ENCODE measurements at regions of chr5 and their contacts with region 1.

Region 1: GRCh38 chr5:67165526-67166459 is 30.8 kb downstream of the CD180 start:
- DNase-seq: peak; percentile 80 to 90 (median 88)
- H3K4me3 ChIP-seq: peak overlapping the region in 5 of 7 experiments; percentile 26 to 71 (median 59)
- H3K27ac ChIP-seq: peak overlapping the region; percentile 13 to 71
- H3K4me1 ChIP-seq: peaks cover 0 to 17% (median 14%) of the 10 kb centered on the region in 4 experiments
- H3K27me3 ChIP-seq: no peaks in the 10 kb centered on the region

Region 2: GRCh38 chr5:67182301-67182790 is 16.6 kb after region 1 on chr5:
- CTCF ChIA-PET with region 1: interaction called, 71 read pairs
- POLR2A ChIA-PET with region 1: no interaction called
- DNase-seq: peak in 1 of 3 donors; percentile 31
- H3K4me3 ChIP-seq: peak overlapping the region in 1 of 7 experiments; percentile 4
- H3K27ac ChIP-seq: no peak overlapping the region
- H3K4me1 ChIP-seq: peaks cover 11 to 33% (median 18%) of the 10 kb centered on the region in 4 experiments
- H3K27me3 ChIP-seq: no peaks in the 10 kb centered on the region

Region 3: DNA sequence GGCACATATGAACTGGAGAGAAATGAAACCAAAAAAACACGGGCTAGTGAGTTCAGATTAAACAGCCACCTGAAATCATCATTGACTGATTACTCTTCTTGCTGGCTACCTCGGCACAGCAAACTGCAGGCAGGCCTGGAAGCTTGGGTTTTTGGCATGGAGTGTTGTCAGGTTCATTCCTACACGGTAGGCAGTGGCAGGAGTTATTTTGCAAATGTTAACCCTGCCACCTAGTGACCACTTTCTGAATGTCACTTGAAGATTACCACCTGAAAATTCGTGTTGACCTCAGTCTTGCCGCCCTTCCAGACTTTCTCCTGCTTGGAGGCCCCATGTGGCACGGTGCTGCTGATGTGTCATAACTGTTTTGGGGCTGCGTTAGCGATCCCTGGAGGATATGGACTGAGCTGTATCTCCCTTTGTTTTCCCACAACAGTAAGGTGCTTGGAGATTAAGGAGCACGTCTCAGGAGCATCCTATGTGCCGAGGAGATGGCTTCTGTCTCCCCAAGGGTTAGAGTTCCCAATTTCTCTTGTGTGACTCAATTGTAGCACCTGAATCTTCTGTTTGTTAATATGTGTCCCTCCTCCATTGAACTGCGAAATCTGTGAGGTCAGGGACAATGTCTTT is 43.5 kb after region 1 on chr5:
- CTCF ChIA-PET with region 1: interaction called, 374 read pairs
- POLR2A ChIA-PET with region 1: interaction called, 8 read pairs
- DNase-seq: peak; percentile 80 to 84 (median 83)
- H3K4me3 ChIP-seq: no peak overlapping the region
- H3K27ac ChIP-seq: no peak overlapping the region
- H3K4me1 ChIP-seq: peaks cover 15 to 50% (median 35%) of the 10 kb centered on the region in 4 experiments
- H3K27me3 ChIP-seq: no peaks in the 10 kb centered on the region

Region 4: GRCh38 chr5:67214731-67215582 is 49.2 kb after region 1 on chr5:
- CTCF ChIA-PET with region 1: interaction called, 374 read pairs
- POLR2A ChIA-PET with region 1: interaction called, 3 read pairs
- DNase-seq: no peak
- H3K4me3 ChIP-seq: no peak overlapping the region
- H3K27ac ChIP-seq: peak overlapping the region in 1 of 2 experiments; percentile 69
- H3K4me1 ChIP-seq: peaks cover 10 to 20% (median 18%) of the 10 kb centered on the region in 4 experiments
- H3K27me3 ChIP-seq: no peaks in the 10 kb centered on the region

Measured in common myeloid progenitor, CD34-positive (primary cell).